ENCODE measurements at regions of chr7 and their contacts with region 1.

Region 1: DNA sequence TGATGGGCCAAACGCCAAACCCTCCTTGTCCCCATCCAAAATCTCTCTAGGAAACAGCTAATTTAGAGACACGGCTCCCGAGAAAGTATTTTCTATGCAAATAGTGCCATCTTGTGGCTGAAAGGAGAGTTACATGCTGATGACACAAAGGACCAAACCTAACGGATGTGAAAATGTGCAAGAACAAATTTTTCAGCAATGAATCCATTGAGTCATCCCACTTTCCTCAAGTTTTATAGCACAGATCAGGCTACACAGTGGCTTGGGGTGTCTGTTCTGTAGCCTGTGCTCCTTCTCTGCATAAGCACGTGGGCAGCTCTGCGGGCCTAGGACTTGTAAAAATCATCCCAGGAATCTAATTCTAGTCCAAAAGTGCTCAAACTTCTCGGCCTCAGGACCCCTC is 154.8 kb upstream of the PRR15 start:
- DNase-seq: peak; percentile 34
- ATAC-seq: peak; percentile 80
- H3K4me3 ChIP-seq: no peak overlapping the region
- H3K27ac ChIP-seq: no peak overlapping the region
- H3K4me1 ChIP-seq: no peaks in the 10 kb centered on the region
- H3K27me3 ChIP-seq: no peaks in the 10 kb centered on the region; the same call in 1 of the 2 replicates
- CTCF ChIP-seq: peak; percentile 67 to 87 (median 79)
- POLR2A ChIP-seq: no peak
- RAD21 ChIP-seq: peak; percentile 94

Region 2: DNA sequence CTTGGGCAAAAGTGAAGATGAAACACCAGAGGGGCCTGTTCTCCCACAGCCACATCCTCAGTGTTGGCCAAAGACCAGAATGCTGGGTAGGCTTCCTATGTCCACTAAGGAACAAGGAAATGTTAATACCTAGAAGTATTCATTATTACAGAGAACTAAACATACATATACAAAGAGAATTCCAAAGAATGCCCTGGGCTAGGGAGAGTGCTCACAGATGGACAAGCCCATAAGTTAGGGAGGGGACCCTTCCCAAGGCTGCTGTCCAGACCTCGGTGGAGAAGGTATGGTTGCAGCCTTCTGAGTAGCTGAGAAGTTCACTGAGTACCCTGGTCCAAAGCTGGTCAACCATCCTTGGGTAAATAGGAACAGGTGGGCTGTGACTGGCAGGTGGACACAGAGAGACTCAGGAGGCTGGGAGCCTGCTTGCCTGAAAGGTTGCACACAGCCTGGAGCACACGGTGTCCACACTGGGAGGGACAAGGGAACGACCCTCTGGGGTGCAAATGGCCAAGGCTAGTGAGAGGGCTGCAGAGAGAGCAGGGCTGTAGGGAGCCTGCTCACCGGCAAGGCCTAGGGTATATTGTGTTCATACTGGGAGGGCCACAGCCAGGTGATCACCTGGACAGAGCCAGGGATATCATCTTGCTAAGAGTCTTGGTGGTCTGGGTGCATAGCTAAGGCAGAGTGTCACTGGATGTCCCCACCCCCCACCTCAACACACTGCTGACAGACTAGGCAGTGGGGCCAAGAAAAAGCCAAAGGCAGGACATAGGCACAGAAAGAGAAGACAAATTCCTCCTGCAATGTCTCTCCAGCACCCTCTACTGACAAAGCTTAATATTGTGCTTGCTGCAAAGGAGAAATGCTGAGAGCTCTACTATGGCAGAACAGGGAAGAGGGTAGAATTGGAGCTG is 302.8 kb before region 1 on chr7:
- CTCF ChIA-PET with region 1: interaction called, 15 read pairs
- POLR2A ChIA-PET with region 1: no interaction called
- RAD21 ChIA-PET with region 1: interaction called, 3 to 10 read pairs
- intact Hi-C with region 1: no loop called
- DNase-seq: peak; percentile 39
- ATAC-seq: peak; percentile 90
- H3K4me3 ChIP-seq: no peak overlapping the region
- H3K27ac ChIP-seq: no peak overlapping the region
- H3K4me1 ChIP-seq: no peaks in the 10 kb centered on the region
- H3K27me3 ChIP-seq: no peaks in the 10 kb centered on the region
- CTCF ChIP-seq: peak; percentile 75 to 85 (median 79); a peak in 5 of 6 replicates
- POLR2A ChIP-seq: no peak
- RAD21 ChIP-seq: peak; percentile 83

Region 3: GRCh38 chr7:29113384-29114103 is 295.3 kb before region 1 on chr7:
- CTCF ChIA-PET with region 1: interaction called, 52 read pairs
- POLR2A ChIA-PET with region 1: no interaction called
- RAD21 ChIA-PET with region 1: interaction called, 5 to 7 read pairs
- intact Hi-C with region 1: loop called (anchors 2 kb)
- DNase-seq: peak; percentile 36
- ATAC-seq: peak; percentile 89
- H3K4me3 ChIP-seq: no peak overlapping the region
- H3K27ac ChIP-seq: no peak overlapping the region
- H3K4me1 ChIP-seq: peaks cover 3 to 20% of the 10 kb centered on the region in 2 experiments; a peak in 3 of 4 replicates
- H3K27me3 ChIP-seq: no peaks in the 10 kb centered on the region
- CTCF ChIP-seq: peak; percentile 46 to 56 (median 54); a peak in 5 of 6 replicates
- POLR2A ChIP-seq: no peak
- RAD21 ChIP-seq: peak; percentile 74

Region 4: GRCh38 chr7:29189743-29190201 is 219.1 kb before region 1 on chr7:
- CTCF ChIA-PET with region 1: interaction called, 8 read pairs
- POLR2A ChIA-PET with region 1: interaction called, 3 read pairs
- RAD21 ChIA-PET with region 1: interaction called in 1 of 2 experiments, 5 read pairs
- intact Hi-C with region 1: loop called (anchors 1 kb)
- DNase-seq: peak; percentile 45
- ATAC-seq: peak; percentile 95
- H3K4me3 ChIP-seq: no peak overlapping the region
- H3K27ac ChIP-seq: no peak overlapping the region
- H3K4me1 ChIP-seq: peaks cover 0 to 9% of the 10 kb centered on the region in 2 experiments; a peak in 2 of 4 replicates
- H3K27me3 ChIP-seq: no peaks in the 10 kb centered on the region
- CTCF ChIP-seq: peak; percentile 57 to 90 (median 78); a peak in 5 of 6 replicates
- POLR2A ChIP-seq: no peak
- RAD21 ChIP-seq: peak; percentile 72

Region 5: DNA sequence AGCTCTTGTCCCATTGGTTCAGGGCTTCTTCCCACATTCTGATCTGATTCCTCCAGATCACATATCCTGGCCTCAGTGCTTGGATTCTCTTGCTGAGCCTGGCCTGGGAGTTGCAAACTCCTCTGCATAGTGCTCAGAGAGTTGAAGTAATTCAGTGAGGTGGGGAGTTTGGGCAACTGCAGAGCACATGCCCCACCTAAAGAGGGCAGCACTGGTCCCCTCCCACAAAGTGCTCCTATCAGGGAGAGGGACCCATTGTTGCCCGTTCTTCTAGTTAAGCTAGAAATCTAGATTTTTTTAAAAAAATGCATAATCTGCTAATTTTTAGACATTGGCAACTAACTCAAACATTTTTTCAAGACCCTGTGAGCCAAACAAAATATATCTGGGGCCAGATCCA is 169.2 kb before region 1 on chr7:
- CTCF ChIA-PET with region 1: no interaction called
- POLR2A ChIA-PET with region 1: no interaction called
- RAD21 ChIA-PET with region 1: no interaction called
- intact Hi-C with region 1: loop called (anchors 5 kb)
- DNase-seq: no peak
- ATAC-seq: peak; percentile 72
- H3K4me3 ChIP-seq: no peak overlapping the region
- H3K27ac ChIP-seq: no peak overlapping the region
- H3K4me1 ChIP-seq: no peaks in the 10 kb centered on the region
- H3K27me3 ChIP-seq: no peaks in the 10 kb centered on the region
- CTCF ChIP-seq: peak; percentile 24 to 72 (median 71); a peak in 4 of 6 replicates
- POLR2A ChIP-seq: no peak
- RAD21 ChIP-seq: peak; percentile 45

Region 6: DNA sequence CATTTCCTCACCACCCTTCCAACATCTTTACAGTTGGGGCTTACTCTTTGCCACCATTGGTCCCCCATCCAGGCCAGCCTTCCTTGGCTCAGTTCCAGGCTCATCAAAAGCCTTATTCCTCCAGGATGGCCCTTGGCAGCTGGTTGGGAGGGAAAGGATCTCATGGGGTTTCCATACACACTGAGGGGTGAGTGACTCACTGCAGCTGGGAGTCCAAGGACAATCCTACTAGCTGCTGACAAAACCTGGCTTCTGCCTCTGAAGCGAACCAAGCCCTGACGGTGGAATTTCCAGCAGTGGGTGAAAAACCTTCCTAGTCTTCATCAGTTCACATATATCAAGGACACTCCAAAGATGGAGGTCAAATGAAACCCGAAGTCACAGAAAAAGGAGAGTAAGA is 1250.5 kb after region 1 on chr7:
- CTCF ChIA-PET with region 1: no interaction called
- POLR2A ChIA-PET with region 1: no interaction called
- RAD21 ChIA-PET with region 1: no interaction called
- intact Hi-C with region 1: no loop called
- DNase-seq: no peak
- ATAC-seq: no peak
- H3K4me3 ChIP-seq: no peak overlapping the region
- H3K27ac ChIP-seq: no peak overlapping the region
- H3K4me1 ChIP-seq: no peaks in the 10 kb centered on the region
- H3K27me3 ChIP-seq: no peaks in the 10 kb centered on the region
- CTCF ChIP-seq: no peak
- POLR2A ChIP-seq: no peak
- RAD21 ChIP-seq: no peak